H1 (cell line): ENCODE measurements at regions of chr18 and their contacts with region 1.

Region 1: DNA sequence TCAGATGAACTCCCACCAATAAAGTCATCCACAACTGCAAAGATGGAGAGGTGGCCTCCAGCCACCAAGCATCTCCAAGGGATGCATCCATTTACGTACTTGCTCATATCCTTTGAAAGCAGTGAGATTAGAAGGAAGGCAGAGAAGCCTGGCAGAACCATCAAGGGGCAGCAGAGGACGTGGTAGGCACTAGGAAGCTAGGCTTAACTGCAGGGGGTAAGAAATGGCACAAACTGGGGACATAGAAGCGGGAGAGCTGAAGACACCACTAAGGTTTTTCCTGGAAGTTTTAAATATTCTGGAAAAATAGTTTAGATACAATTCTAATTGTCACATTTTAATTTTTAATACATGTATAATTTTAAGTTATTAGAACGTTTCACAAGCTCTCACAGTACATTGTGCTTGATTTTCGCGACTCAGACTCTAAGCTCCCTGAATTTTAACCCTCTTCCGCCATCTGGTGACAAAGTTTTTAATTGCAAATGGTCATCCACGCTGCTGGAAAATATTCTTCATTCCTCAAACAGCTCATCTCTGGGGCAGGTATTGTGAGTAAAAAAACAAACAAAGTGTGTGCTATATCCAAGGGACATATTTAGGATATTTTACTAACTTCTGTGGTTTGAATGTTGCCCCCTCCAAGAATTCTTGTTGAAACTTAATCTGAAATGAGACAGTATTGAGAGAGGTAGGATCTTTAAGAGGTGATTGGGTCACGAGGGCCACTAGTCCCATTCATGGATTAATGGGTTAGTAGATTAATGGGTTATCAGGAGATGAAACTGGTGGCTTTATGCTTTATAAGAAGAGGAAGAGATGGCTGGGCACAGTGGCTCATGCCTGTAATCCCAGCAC is 1.6 kb upstream of the PSTPIP2 start:
- DNase-seq: peak in 1 of 2 experiments; percentile 61
- H3K4me3 ChIP-seq: no peak overlapping the region
- H3K27ac ChIP-seq: no peak overlapping the region
- H3K4me1 ChIP-seq: peaks cover 0 to 6% (median 0%) of the 10 kb centered on the region in 4 experiments; a peak in 2 of 7 replicates
- H3K27me3 ChIP-seq: peaks cover 4 to 31% (median 28%) of the 10 kb centered on the region in 4 experiments
- CTCF ChIP-seq: peak; percentile 19 to 55 (median 54)
- EP300 ChIP-seq: no peak
- POLR2A ChIP-seq: no peak
- RAD21 ChIP-seq: peak; percentile 82

Region 2: GRCh38 chr18:45923138-45923537 is 150.6 kb before region 1 on chr18:
- CTCF ChIA-PET with region 1: interaction called, 14 read pairs
- POLR2A ChIA-PET with region 1: interaction called, 3 read pairs
- DNase-seq: no peak
- H3K4me3 ChIP-seq: no peak overlapping the region
- H3K27ac ChIP-seq: no peak overlapping the region
- H3K4me1 ChIP-seq: no peaks in the 10 kb centered on the region
- H3K27me3 ChIP-seq: no peaks in the 10 kb centered on the region
- CTCF ChIP-seq: no peak
- EP300 ChIP-seq: no peak
- POLR2A ChIP-seq: no peak
- RAD21 ChIP-seq: no peak

Region 3: GRCh38 chr18:45967007-45967706 is 106.5 kb before region 1 on chr18 and contains the start of gene EPG5:
- CTCF ChIA-PET with region 1: interaction called, 10 read pairs
- POLR2A ChIA-PET with region 1: no interaction called
- DNase-seq: peak; percentile 90 to 97
- H3K4me3 ChIP-seq: peak within 1 kb of the TSS; percentile 80 to 98 (median 91)
- H3K27ac ChIP-seq: peak within 1 kb of the TSS; percentile 75; the same call in 1 of the 2 replicates
- H3K4me1 ChIP-seq: no peaks in the 10 kb centered on the region
- H3K27me3 ChIP-seq: peaks cover 0 to 3% (median 0%) of the 10 kb centered on the region in 4 experiments; a peak in 3 of 7 replicates
- CTCF ChIP-seq: peak in 1 of 3 experiments; percentile 1; a peak in 1 of 4 replicates
- EP300 ChIP-seq: no peak
- POLR2A ChIP-seq: peak; percentile 81 to 96
- RAD21 ChIP-seq: no peak
- total RNA-seq, gene EPG5: 18.3 and 18.6 TPM in 2 replicates

Region 4: GRCh38 chr18:45974088-45974536 is 99.6 kb before region 1 on chr18:
- CTCF ChIA-PET with region 1: interaction called, 27 read pairs
- POLR2A ChIA-PET with region 1: no interaction called
- DNase-seq: no peak
- H3K4me3 ChIP-seq: no peak overlapping the region
- H3K27ac ChIP-seq: no peak overlapping the region
- H3K4me1 ChIP-seq: peaks cover 0 to 4% (median 3%) of the 10 kb centered on the region in 4 experiments; a peak in 3 of 7 replicates
- H3K27me3 ChIP-seq: peaks cover 0 to under 1% (median 0%) of the 10 kb centered on the region in 4 experiments; a peak in 1 of 7 replicates
- CTCF ChIP-seq: peak in 2 of 3 experiments; percentile 67 to 71; a peak in 3 of 4 replicates
- EP300 ChIP-seq: no peak
- POLR2A ChIP-seq: no peak
- RAD21 ChIP-seq: peak; percentile 81 to 90

Region 5: DNA sequence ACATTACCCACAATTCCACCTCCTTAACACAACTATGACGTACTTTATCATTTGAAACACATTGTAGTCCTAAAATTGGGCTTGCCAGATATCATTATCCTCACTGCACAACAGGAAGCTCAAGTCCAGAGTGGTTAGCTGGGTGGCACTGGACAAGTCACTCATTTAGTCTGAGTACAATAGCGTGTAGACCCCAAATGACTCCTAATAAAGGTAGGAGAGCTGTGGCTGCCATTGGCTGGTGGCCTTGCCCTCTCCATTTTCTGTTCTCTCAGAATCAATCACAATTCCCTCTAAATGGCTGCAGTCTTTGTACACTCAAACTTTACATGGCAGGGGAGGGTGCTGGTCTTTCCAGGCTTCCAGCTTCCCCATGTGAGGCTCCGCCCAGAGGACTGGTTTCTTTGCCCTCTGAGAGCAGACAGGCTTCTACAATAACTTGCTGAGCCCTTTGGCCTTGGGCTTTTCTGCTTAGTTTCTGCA is 13.3 kb before region 1 on chr18:
- CTCF ChIA-PET with region 1: interaction called, 18 read pairs
- POLR2A ChIA-PET with region 1: interaction called, 6 read pairs
- DNase-seq: peak in 1 of 2 experiments; percentile 35
- H3K4me3 ChIP-seq: no peak overlapping the region
- H3K27ac ChIP-seq: no peak overlapping the region
- H3K4me1 ChIP-seq: no peaks in the 10 kb centered on the region
- H3K27me3 ChIP-seq: no peaks in the 10 kb centered on the region
- CTCF ChIP-seq: no peak
- EP300 ChIP-seq: no peak
- POLR2A ChIP-seq: no peak
- RAD21 ChIP-seq: no peak

Region 6: GRCh38 chr18:46084431-46084830 is 10.7 kb after region 1 on chr18:
- CTCF ChIA-PET with region 1: interaction called, 17 read pairs
- POLR2A ChIA-PET with region 1: interaction called, 8 read pairs
- DNase-seq: no peak
- H3K4me3 ChIP-seq: no peak overlapping the region
- H3K27ac ChIP-seq: no peak overlapping the region
- H3K4me1 ChIP-seq: no peaks in the 10 kb centered on the region
- H3K27me3 ChIP-seq: no peaks in the 10 kb centered on the region
- CTCF ChIP-seq: no peak
- EP300 ChIP-seq: no peak
- POLR2A ChIP-seq: no peak
- RAD21 ChIP-seq: no peak